ENCODE measurements at regions of chr3 and their contacts with region 1.

Region 1: GRCh38 chr3:114152519-114153151 is 26.2 kb downstream of the DRD3 start:
- DNase-seq: peak; percentile 76
- ATAC-seq: peak; percentile 94 to 95

Region 2: GRCh38 chr3:114336122-114336697 is 183.6 kb after region 1 on chr3:
- intact Hi-C with region 1: loop called in 1 of 2 experiments (anchors 5 kb)
- DNase-seq: no peak
- ATAC-seq: no peak

Region 3: GRCh38 chr3:114442246-114442645 is 289.6 kb after region 1 on chr3:
- intact Hi-C with region 1: no loop called
- DNase-seq: no peak
- ATAC-seq: peak; percentile 15 to 63